Posterior vena cava (tissue), 2 donors: ENCODE measurements at regions of chr14 and their contacts with region 1.

Region 1: DNA sequence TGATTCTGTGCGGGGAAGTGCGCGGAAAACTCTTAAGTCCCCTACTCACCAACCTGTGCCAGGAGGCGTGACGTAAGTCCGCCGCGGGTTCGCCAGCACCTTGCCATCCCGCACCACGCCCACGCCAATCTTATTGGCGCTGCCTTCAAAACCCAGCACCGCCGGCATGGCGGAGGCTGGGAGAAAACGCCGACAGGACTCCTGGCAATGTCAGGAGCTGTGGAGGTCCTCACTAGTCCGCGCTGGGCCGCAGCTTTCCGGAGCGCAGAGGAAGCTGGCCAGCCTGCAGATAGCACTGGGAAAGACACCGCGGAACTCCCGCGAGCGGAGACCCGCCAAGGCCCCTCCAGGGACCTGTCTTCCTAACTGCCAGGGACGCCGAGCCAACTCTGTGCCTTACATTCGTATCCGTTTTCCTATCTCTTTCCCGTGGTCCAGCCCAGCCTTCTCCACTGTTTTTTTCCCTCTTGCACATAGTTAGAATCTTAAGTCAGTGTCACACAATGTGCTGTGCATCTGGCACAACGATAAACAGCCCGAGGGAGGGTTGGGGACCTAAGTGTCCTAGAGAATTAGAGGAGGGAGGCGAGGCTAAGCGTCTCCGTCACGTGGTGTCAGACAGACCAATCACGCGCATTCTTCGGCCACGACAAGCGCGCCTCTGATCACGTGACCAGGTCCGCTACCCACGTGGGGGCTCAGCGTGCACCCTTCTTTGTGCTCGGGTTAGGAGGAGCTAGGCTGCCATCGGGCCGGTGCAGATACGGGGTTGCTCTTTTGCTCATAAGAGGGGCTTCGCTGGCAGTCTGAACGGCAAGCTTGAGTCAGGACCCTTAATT is at the starts of genes APEX1 and OSGEP:
- DNase-seq: peak; percentile 100
- total RNA-seq, gene APEX1: 74.3 to 96.2 TPM
- total RNA-seq, gene OSGEP: 24.4 to 28.7 TPM

Region 2: DNA sequence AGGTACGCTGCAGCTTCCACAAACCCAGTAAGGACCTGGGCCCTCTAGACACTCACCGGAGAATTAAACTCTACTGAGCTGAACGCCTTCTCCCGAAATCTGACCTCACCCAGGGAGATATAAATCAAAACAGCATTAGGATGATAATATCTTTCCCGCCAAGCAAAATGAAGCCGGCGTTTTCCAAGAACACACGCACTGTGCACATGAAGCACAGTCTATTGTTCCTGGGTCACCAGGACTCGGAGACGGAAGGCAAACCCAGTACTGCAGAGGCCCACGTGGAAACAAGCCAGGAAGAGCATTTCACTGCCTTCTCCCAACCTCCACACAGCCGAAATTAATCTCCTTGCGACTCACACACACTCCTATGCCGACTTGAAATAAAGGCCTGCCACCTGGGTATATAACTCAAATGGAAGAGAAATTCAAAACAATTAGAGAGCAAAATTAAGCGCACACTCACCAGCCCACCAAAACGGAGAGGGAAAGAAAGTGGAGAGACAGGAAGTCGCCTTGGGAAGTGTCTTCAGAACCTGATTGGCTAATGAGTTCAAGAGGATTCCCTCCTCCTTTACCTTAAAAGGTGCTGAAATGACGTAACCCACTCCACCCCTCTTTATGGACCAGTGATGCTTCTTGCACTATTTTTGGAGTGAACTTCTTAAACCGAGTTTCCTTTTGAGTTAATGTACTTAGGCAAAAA is 121.8 kb before region 1 on chr14 and contains the start of gene CCNB1IP1:
- intact Hi-C with region 1: loop called in 1 of 2 experiments (anchors 10 kb)
- DNase-seq: no peak
- total RNA-seq, gene CCNB1IP1: 28.9 to 31.1 TPM

Region 3: GRCh38 chr14:20970983-20971704 is 516.4 kb after region 1 on chr14:
- intact Hi-C with region 1: loop called in 1 of 2 experiments (anchors 10 kb)
- DNase-seq: peak; percentile 96